Ascending aorta (tissue), 2 donors: ENCODE measurements at regions of chr3 and their contacts with region 1.

Region 1: DNA sequence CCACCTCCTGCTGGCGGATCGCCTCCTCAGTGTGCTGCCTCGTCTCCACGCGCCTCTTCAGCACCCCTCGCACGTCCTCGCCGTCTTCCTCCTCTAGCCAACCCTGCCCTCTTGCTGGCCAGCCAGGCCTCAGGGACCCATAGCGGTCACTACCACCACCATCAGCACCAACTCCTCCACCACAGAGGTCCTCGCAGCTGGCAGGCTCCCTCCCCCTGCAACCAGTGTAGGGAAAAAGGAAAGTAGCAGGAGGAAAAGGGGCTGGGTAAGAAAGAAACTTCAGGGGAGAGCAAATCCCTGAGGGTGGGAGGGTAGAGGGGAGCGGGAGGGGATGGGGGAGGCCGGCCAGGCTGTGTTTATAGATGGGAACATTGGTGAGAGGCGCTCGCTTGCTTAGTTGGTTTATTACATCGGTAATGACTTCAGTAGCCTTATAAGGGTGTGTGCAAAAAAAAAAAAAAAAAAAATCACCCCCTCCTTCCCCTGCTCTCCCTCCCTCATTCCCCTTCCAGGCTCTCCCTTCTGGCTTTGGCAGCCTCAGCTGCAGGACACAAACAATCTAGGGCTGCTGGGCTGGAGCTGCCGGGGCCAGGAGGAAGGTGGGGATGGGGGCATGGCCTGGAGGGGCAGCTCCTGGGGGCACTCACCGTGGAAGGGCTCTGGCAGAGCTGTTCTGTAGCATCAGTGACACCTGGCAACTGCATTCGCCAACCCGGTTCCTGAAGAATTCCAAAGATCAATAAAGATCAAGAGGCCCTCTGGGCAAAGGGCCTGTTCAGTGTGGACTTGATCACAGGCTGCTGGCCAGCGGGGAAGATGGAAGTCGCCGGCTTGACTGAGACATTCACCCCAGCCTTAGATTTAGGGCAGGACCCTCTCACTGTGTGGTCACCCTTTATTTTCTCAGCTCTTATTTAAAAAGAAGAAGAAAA is 116.2 kb upstream of the HACD2 start:
- DNase-seq: peak in 1 of 2 donors; percentile 86
- H3K4me3 ChIP-seq: peak overlapping the region; percentile 49 to 84
- H3K27ac ChIP-seq: peak overlapping the region; percentile 91 to 92
- H3K4me1 ChIP-seq: peaks cover 0 to 46% of the 10 kb centered on the region in 2 donors
- H3K27me3 ChIP-seq: no peaks in the 10 kb centered on the region
- CTCF ChIP-seq: peak in 1 of 3 experiments; percentile 7

Region 2: DNA sequence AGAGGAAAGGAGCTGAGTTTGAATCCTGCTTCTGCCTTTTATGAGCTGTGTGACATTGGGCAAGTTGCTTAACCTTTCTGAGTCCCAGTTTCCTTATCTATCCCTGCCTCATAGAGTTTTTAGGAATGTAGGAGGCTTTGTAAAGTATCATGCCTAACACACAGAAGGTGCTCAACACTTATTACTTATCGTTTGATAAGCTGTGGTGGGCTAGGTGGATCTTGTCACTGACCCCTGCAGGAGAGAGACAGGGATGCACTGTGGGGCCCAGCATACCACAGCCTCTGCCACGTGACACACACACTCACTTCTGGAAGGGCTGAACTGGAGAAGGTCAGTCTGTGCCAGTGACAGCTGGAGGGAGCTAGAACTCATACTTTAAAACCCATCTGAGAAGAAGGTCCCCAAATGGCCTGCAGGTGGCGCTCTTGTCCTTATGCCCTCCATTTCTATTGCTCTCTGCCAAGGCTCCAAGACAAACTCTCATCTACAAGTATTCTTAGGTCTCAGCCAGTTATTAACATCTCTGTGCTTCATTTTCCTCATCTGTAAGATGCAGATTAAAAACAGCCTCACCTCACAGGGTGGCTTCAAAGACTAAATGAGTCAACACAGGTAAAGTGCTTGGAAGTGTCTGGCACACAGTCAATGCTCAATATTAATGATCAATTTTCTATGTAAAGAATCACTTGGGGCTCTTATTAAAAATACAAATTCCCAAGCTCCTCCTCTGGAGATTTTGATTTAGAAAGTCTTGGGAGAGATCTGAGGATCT is 58.7 kb before region 1 on chr3:
- intact Hi-C with region 1: loop called (anchors 2 kb)
- DNase-seq: peak in 1 of 2 donors; percentile 93
- H3K4me3 ChIP-seq: no peak overlapping the region
- H3K27ac ChIP-seq: peak overlapping the region; percentile 67
- H3K4me1 ChIP-seq: peaks cover 5 to 20% of the 10 kb centered on the region in 2 donors
- H3K27me3 ChIP-seq: no peaks in the 10 kb centered on the region
- CTCF ChIP-seq: peak; percentile 83 to 87 (median 84)

Region 3: DNA sequence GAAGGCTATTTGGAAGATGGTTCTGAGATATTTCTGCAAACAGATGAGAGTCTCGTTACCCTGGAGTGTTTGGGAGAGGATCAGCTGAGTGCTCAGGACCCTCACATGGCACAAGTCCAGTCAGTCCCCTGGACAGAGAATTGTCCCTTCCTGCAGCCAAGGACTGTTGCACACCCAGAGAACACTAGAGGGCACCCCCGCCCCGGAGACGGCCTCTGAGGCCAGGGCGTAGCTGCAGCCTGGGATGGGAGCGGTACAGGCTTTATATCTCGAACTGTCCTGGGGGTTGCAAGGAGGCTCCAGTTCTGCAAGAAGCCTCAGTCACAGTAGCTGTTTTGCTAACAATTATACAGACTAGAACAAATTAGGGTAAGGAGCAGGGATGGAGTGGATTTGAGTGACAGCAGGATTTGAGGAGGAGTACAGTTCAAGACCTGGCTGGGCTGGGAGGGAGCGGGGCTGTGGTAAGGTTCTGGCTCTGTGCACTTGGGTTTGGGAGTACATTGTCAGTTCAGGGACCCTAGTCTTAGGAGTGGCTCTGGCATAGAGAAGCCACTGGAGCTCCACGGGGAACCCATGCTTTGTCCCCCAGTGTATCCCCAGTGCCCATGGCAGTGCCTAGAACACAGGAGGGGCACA is 48.6 kb before region 1 on chr3:
- intact Hi-C with region 1: loop called (anchors 1 kb)
- DNase-seq: peak in 1 of 2 donors; percentile 87
- H3K4me3 ChIP-seq: no peak overlapping the region
- H3K27ac ChIP-seq: peak overlapping the region; percentile 85 to 96
- H3K4me1 ChIP-seq: peaks cover 18 to 54% of the 10 kb centered on the region in 2 donors
- H3K27me3 ChIP-seq: no peaks in the 10 kb centered on the region
- CTCF ChIP-seq: peak; percentile 81 to 93 (median 89)

Region 4: DNA sequence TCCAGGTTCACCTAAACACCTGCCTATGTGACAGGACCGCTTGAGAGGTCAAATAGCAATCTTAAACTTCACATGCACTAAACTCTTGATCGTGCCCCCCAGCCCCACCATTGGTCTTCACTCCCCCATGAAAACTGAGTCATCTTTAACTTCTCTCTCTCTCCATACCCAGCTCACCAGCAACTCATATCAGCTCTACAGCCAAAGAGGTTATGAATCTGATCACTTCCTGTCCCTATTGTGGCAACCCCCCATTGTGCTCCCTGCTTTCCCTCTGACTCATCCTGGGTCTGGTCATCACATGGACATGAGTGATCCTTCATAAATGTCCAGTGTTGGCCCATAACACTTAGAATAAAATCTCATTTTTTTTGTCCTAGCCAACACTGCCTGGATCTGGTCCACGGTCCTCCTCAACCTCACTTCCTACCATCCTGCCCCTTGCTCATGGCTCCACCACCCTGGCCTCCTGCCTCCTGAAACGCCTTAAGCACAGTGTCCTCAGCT is 12.8 kb before region 1 on chr3:
- intact Hi-C with region 1: loop called (anchors 1 kb)
- DNase-seq: peak in 1 of 2 donors; percentile 88
- H3K4me3 ChIP-seq: no peak overlapping the region
- H3K27ac ChIP-seq: peak overlapping the region; percentile 91 to 92
- H3K4me1 ChIP-seq: peaks cover 39 to 78% of the 10 kb centered on the region in 2 donors
- H3K27me3 ChIP-seq: no peaks in the 10 kb centered on the region
- CTCF ChIP-seq: no peak

Region 5: GRCh38 chr3:123723522-123724168 is 22.6 kb after region 1 on chr3:
- intact Hi-C with region 1: loop called (anchors 2 kb)
- DNase-seq: peak in 1 of 2 donors; percentile 75
- H3K4me3 ChIP-seq: no peak overlapping the region
- H3K27ac ChIP-seq: peak overlapping the region; percentile 34 to 56
- H3K4me1 ChIP-seq: peaks cover 11 to 46% of the 10 kb centered on the region in 2 donors
- H3K27me3 ChIP-seq: no peaks in the 10 kb centered on the region
- CTCF ChIP-seq: peak; percentile 77 to 82 (median 81)